ENCODE measurements at regions of chr5 and their contacts with region 1.

Region 1: GRCh38 chr5:431001-431710 is 11.8 kb upstream of the EXOC3 start:
- DNase-seq: peak in 2 of 5 donors; percentile 15 to 63
- H3K4me3 ChIP-seq: no peak overlapping the region
- H3K4me3 Mint-ChIP-seq: no peak overlapping the region
- H3K27ac ChIP-seq: no peak overlapping the region
- H3K27ac Mint-ChIP-seq: peak overlapping the region in 1 of 8 donors; percentile 38
- H3K4me1 ChIP-seq: no peaks in the 10 kb centered on the region
- H3K4me1 Mint-ChIP-seq: no peaks in the 10 kb centered on the region
- H3K27me3 ChIP-seq: no peaks in the 10 kb centered on the region
- H3K27me3 Mint-ChIP-seq: peaks cover 3 to 17% of the 10 kb centered on the region in 2 donors

Region 2: DNA sequence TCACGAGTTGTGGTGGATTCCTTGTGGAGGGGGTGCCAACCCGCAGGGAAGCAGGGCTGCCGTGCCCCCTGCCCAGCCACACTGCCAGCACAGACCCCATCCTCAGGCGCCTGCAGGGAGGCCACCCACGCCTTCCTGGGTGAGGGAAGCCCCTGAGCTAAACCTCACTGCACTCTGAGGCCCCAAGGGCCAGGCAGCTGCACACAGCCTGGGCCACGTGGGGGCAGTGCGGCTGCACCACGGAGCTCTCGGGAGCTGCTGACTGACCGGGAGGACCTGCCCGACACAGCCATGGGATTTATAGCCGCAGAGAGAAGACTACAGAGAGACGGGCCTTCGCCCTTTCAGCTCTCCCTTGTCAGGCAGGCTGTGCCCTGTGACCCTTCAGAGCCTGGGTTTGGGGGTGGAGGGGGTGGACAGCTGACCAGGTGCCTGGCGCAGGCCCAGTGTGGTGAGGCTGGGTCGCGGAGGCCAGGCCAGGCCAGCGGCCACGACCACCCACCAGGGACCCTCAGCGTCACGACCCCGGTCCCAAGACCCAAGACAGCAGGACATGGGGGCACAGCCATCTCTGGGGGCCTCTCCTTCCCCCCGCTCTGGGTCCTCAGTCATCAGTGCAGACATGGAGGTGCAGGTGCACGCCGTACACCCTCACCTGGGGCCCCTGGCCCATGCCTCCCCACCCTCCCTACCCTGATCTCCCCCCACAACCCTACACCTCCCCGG is 113.9 kb before region 1 on chr5:
- CTCF ChIA-PET with region 1: interaction called, 23 read pairs
- POLR2A ChIA-PET with region 1: no interaction called
- DNase-seq: peak in 1 of 5 donors; percentile 61
- H3K4me3 ChIP-seq: no peak overlapping the region
- H3K4me3 Mint-ChIP-seq: no peak overlapping the region
- H3K27ac ChIP-seq: no peak overlapping the region
- H3K27ac Mint-ChIP-seq: peak overlapping the region in 1 of 8 donors; percentile 77
- H3K4me1 ChIP-seq: no peaks in the 10 kb centered on the region
- H3K4me1 Mint-ChIP-seq: peaks cover 2 to 22% (median 5%) of the 10 kb centered on the region in 3 donors
- H3K27me3 ChIP-seq: peaks cover 4% of the 10 kb centered on the region
- H3K27me3 Mint-ChIP-seq: peaks cover 12 to 17% of the 10 kb centered on the region in 2 donors

Region 3: GRCh38 chr5:367358-368130 is 63.6 kb before region 1 on chr5:
- CTCF ChIA-PET with region 1: no interaction called
- POLR2A ChIA-PET with region 1: no interaction called
- DNase-seq: no peak
- H3K4me3 ChIP-seq: no peak overlapping the region
- H3K4me3 Mint-ChIP-seq: no peak overlapping the region
- H3K27ac ChIP-seq: no peak overlapping the region
- H3K27ac Mint-ChIP-seq: peak overlapping the region in 1 of 8 donors; percentile 21
- H3K4me1 ChIP-seq: peaks cover 12% of the 10 kb centered on the region
- H3K4me1 Mint-ChIP-seq: peaks cover 11 to 29% (median 20%) of the 10 kb centered on the region in 3 donors
- H3K27me3 ChIP-seq: peaks cover 3% of the 10 kb centered on the region
- H3K27me3 Mint-ChIP-seq: peaks cover 18 to 24% of the 10 kb centered on the region in 2 donors